ENCODE measurements at regions of chr15 and their contacts with region 1.

Region 1: GRCh38 chr15:45205192-45205591 is 17.4 kb upstream of the SHF start:
- DNase-seq: peak; percentile 76
- ATAC-seq: peak; percentile 34
- H3K4me3 Mint-ChIP-seq: no peak overlapping the region
- H3K27ac Mint-ChIP-seq: no peak overlapping the region
- H3K4me1 Mint-ChIP-seq: peaks cover 2% of the 10 kb centered on the region
- H3K27me3 Mint-ChIP-seq: peaks cover 6% of the 10 kb centered on the region
- CTCF ChIP-seq: peak; percentile 76

Region 2: DNA sequence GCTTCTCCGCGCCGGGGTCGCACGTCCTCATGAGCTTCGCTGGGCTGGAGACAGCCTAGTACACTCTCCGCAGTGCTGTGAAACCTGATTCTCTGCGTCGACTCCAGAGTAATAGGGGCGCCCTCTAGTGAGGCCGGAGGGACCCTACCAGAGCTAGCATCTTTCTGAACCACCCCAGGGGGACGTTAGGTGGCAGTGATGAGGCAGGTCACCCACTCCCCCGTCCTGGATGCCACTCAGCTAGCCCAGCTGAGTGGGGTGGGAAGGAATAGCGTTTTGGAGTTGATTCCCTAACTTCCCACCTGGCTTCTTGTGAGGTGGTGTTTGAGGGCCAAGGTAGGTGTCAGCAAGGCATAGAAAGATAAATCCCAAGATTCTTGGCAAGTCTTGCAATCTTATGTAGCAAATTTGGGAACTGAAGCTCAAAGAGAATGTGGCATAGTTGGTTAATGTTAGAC is 87.0 kb before region 1 on chr15:
- CTCF ChIA-PET with region 1: interaction called, 16 read pairs
- POLR2A ChIA-PET with region 1: no interaction called
- intact Hi-C with region 1: no loop called
- DNase-seq: peak; percentile 93
- ATAC-seq: peak; percentile 99
- H3K4me3 Mint-ChIP-seq: peak overlapping the region; percentile 36
- H3K27ac Mint-ChIP-seq: no peak overlapping the region
- H3K4me1 Mint-ChIP-seq: peaks cover 33% of the 10 kb centered on the region
- H3K27me3 Mint-ChIP-seq: peaks cover 58% of the 10 kb centered on the region
- CTCF ChIP-seq: peak; percentile 100

Region 3: GRCh38 chr15:45166834-45167630 is 38.2 kb before region 1 on chr15:
- CTCF ChIA-PET with region 1: interaction called, 39 read pairs
- POLR2A ChIA-PET with region 1: interaction called, 51 read pairs
- intact Hi-C with region 1: no loop called
- DNase-seq: peak; percentile 89
- ATAC-seq: peak; percentile 91
- H3K4me3 Mint-ChIP-seq: peak overlapping the region; percentile 63
- H3K27ac Mint-ChIP-seq: peak overlapping the region; percentile 75
- H3K4me1 Mint-ChIP-seq: peaks cover 14% of the 10 kb centered on the region
- H3K27me3 Mint-ChIP-seq: no peaks in the 10 kb centered on the region
- CTCF ChIP-seq: peak; percentile 70

Region 4: GRCh38 chr15:45187894-45188830 is 17.0 kb before region 1 on chr15 and contains the start of gene SHF:
- CTCF ChIA-PET with region 1: interaction called, 18 read pairs
- POLR2A ChIA-PET with region 1: interaction called, 85 read pairs
- intact Hi-C with region 1: no loop called
- DNase-seq: peak; percentile 92
- ATAC-seq: peak; percentile 81
- H3K4me3 Mint-ChIP-seq: peak within 1 kb of the TSS; percentile 77
- H3K27ac Mint-ChIP-seq: peak within 1 kb of the TSS; percentile 92
- H3K4me1 Mint-ChIP-seq: peaks cover 28% of the 10 kb centered on the region
- H3K27me3 Mint-ChIP-seq: no peaks in the 10 kb centered on the region
- CTCF ChIP-seq: no peak
- total RNA-seq, gene SHF: 19.8 to 23.5 TPM

Region 5: DNA sequence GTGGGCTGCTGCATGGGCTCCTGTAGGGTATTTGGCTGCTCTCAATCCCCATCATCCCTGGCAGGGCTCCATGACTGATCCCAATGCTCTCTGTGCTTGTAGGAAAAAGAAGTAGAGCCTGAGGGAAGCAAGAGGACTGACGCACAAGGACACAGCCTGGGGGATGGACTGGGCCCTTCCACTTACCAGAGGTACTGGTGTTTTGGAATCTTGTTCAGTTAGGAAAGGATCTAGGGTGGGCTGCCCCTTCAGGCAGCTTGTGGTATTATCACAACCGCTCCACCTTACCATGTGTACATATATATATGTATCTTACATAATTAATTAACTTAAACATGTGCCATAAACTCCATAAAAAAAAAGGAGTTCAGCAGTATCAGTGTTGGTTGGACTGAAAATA is 48.1 kb after region 1 on chr15:
- CTCF ChIA-PET with region 1: interaction called, 13 read pairs
- POLR2A ChIA-PET with region 1: no interaction called
- intact Hi-C with region 1: no loop called
- DNase-seq: peak; percentile 19
- ATAC-seq: peak; percentile 45
- H3K4me3 Mint-ChIP-seq: no peak overlapping the region
- H3K27ac Mint-ChIP-seq: no peak overlapping the region
- H3K4me1 Mint-ChIP-seq: no peaks in the 10 kb centered on the region
- H3K27me3 Mint-ChIP-seq: no peaks in the 10 kb centered on the region
- CTCF ChIP-seq: peak; percentile 50

Region 6: GRCh38 chr15:45386420-45386819 is 181.2 kb after region 1 on chr15:
- CTCF ChIA-PET with region 1: interaction called, 14 read pairs
- POLR2A ChIA-PET with region 1: no interaction called
- intact Hi-C with region 1: no loop called
- DNase-seq: no peak
- ATAC-seq: no peak
- H3K4me3 Mint-ChIP-seq: no peak overlapping the region
- H3K27ac Mint-ChIP-seq: no peak overlapping the region
- H3K4me1 Mint-ChIP-seq: no peaks in the 10 kb centered on the region
- H3K27me3 Mint-ChIP-seq: peaks cover 1% of the 10 kb centered on the region
- CTCF ChIP-seq: no peak

Region 7: DNA sequence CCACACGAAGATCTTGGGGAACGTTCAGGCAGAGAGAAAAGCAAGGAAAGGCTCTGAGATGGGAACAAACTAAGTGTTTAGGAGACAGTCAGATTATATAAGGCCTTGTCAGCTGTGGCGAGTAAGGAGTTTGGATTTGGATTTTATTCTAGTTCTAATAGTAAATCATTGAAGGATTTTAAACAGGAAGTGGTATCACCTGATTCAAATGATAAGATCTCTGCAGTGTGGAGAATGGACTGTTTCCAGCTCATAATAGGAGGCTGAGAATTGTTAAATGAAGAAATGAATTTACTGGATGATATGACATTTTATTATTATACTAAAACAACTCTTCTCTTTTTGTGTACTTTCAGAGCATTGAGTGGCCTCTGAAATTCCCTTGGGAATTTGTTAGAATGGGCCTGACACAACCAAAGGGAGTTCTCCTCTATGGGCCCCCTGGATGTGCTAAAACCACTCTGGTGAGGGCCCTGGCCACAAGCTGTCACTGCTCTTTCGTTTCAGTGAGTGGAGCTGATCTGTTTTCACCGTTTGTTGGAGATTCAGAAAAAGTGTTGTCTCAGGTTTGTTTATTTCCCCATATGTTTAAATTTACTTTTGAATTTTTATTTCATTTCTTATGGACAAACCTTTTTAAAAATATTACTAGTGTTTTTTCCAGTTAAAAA is 209.2 kb after region 1 on chr15:
- CTCF ChIA-PET with region 1: interaction called, 11 read pairs
- POLR2A ChIA-PET with region 1: no interaction called
- intact Hi-C with region 1: no loop called
- DNase-seq: no peak
- ATAC-seq: no peak
- H3K4me3 Mint-ChIP-seq: no peak overlapping the region
- H3K27ac Mint-ChIP-seq: peak overlapping the region; percentile 53
- H3K4me1 Mint-ChIP-seq: peaks cover 17% of the 10 kb centered on the region
- H3K27me3 Mint-ChIP-seq: no peaks in the 10 kb centered on the region
- CTCF ChIP-seq: no peak